ENCODE measurements at regions of chr15 and their contacts with region 1.

Region 1: GRCh38 chr15:59976480-59977271 is 27.4 kb upstream of the FOXB1 start:
- DNase-seq: no peak
- ATAC-seq: no peak
- H3K4me3 ChIP-seq: no peak overlapping the region
- H3K27ac ChIP-seq: no peak overlapping the region
- H3K4me1 ChIP-seq: no peaks in the 10 kb centered on the region
- H3K27me3 ChIP-seq: no peaks in the 10 kb centered on the region; a peak in 1 of 5 replicates
- CTCF ChIP-seq: no peak
- EP300 ChIP-seq: no peak
- POLR2A ChIP-seq: no peak
- RAD21 ChIP-seq: no peak

Region 2: DNA sequence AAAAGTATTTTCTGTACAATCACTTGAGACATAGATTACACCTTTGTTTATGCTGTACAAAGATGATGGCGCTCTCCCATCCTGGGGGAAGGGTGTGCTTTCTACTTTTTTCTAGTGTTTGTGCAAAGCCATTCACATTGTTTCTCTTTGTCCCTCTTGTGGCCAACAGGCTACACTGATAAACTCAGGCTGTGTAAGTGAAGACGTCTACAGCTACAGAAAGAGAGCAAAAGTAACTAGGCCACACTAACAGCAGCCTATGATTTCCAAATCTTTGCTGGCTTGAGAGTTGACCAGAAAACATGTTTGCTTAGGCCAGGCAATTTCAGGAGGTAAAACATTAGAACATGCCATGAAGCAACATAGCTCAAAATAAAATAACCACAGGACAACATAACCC is 102.5 kb after region 1 on chr15:
- CTCF ChIA-PET with region 1: no interaction called
- POLR2A ChIA-PET with region 1: no interaction called
- in situ Hi-C with region 1: loop called (anchors 5 kb)
- intact Hi-C with region 1: no loop called
- DNase-seq: no peak
- ATAC-seq: no peak
- H3K4me3 ChIP-seq: no peak overlapping the region
- H3K27ac ChIP-seq: no peak overlapping the region
- H3K4me1 ChIP-seq: no peaks in the 10 kb centered on the region
- H3K27me3 ChIP-seq: peaks cover 11 to 12% of the 10 kb centered on the region in 2 experiments; a peak in 4 of 5 replicates
- CTCF ChIP-seq: peak in 1 of 3 experiments; percentile 26; a peak in 2 of 6 replicates
- EP300 ChIP-seq: no peak
- POLR2A ChIP-seq: no peak
- RAD21 ChIP-seq: peak; percentile 56 to 64

Measured in K562 (cell line).